ENCODE measurements at regions of chr9 and their contacts with region 1.

Region 1: DNA sequence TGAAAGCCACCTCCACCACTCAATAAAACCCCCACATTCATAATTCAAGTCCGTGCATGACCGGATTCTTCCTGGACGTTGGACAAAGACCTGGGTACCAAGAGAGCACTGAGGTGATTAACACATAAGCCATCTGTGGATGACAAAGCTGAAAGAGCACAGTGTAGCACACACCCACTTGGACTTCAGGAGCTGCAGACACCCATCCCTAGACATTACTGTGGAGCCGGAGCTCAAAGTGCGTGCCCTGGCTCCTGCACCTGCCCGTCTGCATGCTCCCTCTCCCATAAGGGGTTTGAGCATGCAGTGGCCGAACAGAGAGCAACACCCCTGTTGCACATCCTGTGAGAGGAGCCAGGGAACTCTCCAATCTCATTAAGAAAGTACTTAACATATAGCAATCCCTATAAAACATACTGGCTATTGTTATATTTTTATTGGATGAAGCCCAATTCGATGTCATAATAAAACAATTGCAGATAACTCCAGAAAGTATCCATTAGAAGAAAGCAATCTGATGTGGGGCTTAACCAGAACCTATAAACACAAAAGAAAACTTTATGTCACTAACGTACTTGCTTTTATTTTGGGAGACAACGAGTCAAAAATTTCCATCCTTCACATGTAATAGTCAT is 1174.2 kb upstream of the C9orf72 start:
- DNase-seq: no peak

Region 2: GRCh38 chr9:27618066-27618465 is 1129.4 kb before region 1 on chr9:
- intact Hi-C with region 1: loop called in 1 of 2 experiments (anchors 10 kb)
- DNase-seq: no peak

Region 3: GRCh38 chr9:28899926-28900325 is 152.5 kb after region 1 on chr9:
- intact Hi-C with region 1: no loop called
- DNase-seq: peak; percentile 70